Calu3 (cell line): ENCODE measurements at regions of chr13 and their contacts with region 1.

Region 1: GRCh38 chr13:36818804-36819738 is at the start of gene RFXAP:
- DNase-seq: peak; percentile 86
- H3K4me3 Mint-ChIP-seq: peak within 1 kb of the TSS; percentile 93
- H3K27ac Mint-ChIP-seq: peak within 1 kb of the TSS; percentile 61
- H3K4me1 Mint-ChIP-seq: peaks cover 22% of the 10 kb centered on the region
- H3K27me3 Mint-ChIP-seq: no peaks in the 10 kb centered on the region
- CTCF ChIP-seq: no peak
- total RNA-seq, gene RFXAP: 3.8 and 6.2 TPM in 2 replicates

Region 2: DNA sequence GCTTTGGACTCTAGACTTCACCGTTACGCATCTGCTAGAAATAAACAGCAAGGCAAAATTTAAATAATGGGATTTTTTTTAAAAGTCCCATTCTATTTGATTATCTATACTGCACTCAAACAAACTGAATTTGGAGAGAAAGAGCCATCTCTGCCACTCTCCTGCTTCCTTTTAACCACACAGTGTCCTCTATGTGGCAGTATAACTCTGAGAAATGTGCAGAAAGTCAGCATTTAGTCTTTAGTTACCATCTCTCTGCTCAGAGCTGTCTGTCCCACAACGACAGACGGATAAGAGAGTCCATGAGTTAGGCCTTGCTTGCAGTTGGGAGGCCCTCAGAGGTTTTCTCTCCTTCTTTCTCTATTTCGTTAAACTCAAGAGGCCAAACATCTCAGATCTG is 365.6 kb before region 1 on chr13:
- CTCF ChIA-PET with region 1: no interaction called
- intact Hi-C with region 1: loop called (anchors 10 kb)
- DNase-seq: no peak
- H3K4me3 Mint-ChIP-seq: no peak overlapping the region
- H3K27ac Mint-ChIP-seq: no peak overlapping the region
- H3K4me1 Mint-ChIP-seq: no peaks in the 10 kb centered on the region
- H3K27me3 Mint-ChIP-seq: no peaks in the 10 kb centered on the region
- CTCF ChIP-seq: no peak

Region 3: DNA sequence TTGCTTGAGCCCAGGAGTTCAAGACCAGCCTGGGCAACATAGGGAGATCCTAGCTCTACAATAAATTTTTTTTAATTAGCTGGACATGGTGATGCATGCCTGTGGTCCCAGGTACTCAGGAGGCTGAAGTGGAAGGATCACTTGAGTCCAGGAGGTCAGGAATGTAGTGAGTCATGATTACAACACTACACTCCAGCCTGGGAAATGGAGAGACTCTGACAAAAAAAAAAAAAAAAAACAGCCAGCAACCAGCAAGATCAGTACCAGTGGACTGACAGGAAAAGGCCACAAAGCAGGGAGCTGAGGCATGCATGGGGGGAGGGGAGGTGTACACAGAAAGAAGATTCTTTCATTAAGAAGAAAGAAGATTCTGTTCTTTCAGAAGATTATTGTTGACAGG is 52.8 kb before region 1 on chr13:
- CTCF ChIA-PET with region 1: no interaction called
- intact Hi-C with region 1: loop called (anchors 5 kb)
- DNase-seq: peak; percentile 26
- H3K4me3 Mint-ChIP-seq: no peak overlapping the region
- H3K27ac Mint-ChIP-seq: peak overlapping the region; percentile 72
- H3K4me1 Mint-ChIP-seq: peaks cover 43% of the 10 kb centered on the region
- H3K27me3 Mint-ChIP-seq: no peaks in the 10 kb centered on the region
- CTCF ChIP-seq: no peak

Region 4: DNA sequence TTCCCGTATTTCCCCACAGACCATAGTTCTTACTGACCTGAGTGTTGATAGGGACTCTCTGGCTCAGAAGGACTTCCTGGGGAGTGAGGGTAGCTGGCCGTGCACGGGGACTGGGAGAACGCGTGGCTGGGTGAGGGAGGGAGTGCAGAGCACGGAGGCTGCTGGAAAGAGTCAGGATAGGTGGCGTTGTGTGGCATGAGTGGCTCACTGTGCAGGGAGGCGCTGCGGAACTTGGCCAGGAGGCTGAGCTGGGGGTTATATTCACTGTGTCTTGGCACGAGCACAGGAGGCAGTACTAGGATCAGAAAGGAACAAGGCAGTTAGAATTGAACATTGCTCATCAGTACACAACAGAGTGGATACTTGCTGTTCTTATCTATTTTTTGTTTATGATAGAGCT is 53.5 kb after region 1 on chr13:
- CTCF ChIA-PET with region 1: no interaction called
- intact Hi-C with region 1: no loop called
- DNase-seq: no peak
- H3K4me3 Mint-ChIP-seq: no peak overlapping the region
- H3K27ac Mint-ChIP-seq: no peak overlapping the region
- H3K4me1 Mint-ChIP-seq: peaks cover 10% of the 10 kb centered on the region
- H3K27me3 Mint-ChIP-seq: no peaks in the 10 kb centered on the region
- CTCF ChIP-seq: no peak

Region 5: GRCh38 chr13:37395566-37395965 is 576.5 kb after region 1 on chr13:
- CTCF ChIA-PET with region 1: no interaction called
- intact Hi-C with region 1: no loop called
- DNase-seq: no peak
- H3K4me3 Mint-ChIP-seq: no peak overlapping the region
- H3K27ac Mint-ChIP-seq: no peak overlapping the region
- H3K4me1 Mint-ChIP-seq: no peaks in the 10 kb centered on the region
- H3K27me3 Mint-ChIP-seq: peaks cover 8% of the 10 kb centered on the region
- CTCF ChIP-seq: no peak